B cell (primary cell): ENCODE measurements at regions of chrX and their contacts with region 1.

Region 1: DNA sequence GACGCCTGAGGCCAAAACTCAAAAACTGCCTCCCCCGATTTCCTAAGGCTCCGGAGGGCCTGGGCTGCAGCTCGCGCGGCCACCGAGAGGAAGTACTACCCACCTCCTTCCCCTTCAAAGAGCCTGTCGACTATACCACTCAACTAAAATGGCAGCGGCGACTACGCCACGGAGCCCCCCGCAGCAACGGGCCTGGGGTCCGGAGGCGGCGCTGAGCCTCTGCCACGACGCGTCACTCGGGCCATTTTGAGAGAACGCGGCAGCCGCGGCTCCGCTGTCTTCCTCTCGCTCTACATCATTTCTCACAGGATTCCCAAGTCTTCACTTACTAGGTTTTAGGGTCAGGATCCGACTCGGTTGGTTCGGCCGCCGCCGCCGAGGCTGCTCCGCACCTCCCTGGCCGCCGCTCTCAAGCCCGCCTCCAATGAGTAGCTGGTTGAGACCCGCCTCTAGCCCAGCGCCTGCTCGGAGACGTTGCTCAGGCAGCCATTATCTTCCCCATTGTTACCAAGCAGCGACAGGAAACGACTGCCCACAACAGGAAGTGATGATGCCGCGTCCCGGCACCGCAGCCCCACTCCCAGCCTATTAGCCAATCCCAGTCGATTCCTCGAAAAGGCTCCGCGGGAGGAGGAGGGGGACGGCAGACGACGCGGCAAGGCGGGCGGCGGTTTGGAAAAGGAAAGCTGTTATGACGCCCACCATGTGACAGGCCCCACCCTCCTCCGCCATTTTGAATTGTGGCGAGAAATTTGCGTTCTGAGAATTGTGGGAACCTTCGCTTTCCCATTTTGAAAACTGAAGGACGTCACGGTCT is at the start of gene RLIM:
- DNase-seq: peak; percentile 94
- ATAC-seq: peak; percentile 85
- H3K4me3 ChIP-seq: peak within 1 kb of the TSS; percentile 67 to 94 (median 75)
- H3K4me3 Mint-ChIP-seq: peak within 1 kb of the TSS; percentile 99
- H3K27ac ChIP-seq: peak within 1 kb of the TSS; percentile 98 to 99
- H3K27ac Mint-ChIP-seq: peak within 1 kb of the TSS; percentile 100
- H3K4me1 ChIP-seq: peaks cover 0 to 14% of the 10 kb centered on the region in 2 donors
- H3K4me1 Mint-ChIP-seq: peaks cover 23% of the 10 kb centered on the region
- H3K27me3 ChIP-seq: no peaks in the 10 kb centered on the region
- H3K27me3 Mint-ChIP-seq: no peaks in the 10 kb centered on the region
- CTCF ChIP-seq: no peak
- total RNA-seq, gene RLIM: 40.8 and 43.1 TPM in 2 replicates

Region 2: GRCh38 chrX:74291964-74292807 is 322.1 kb before region 1 on chrX:
- CTCF ChIA-PET with region 1: no interaction called
- POLR2A ChIA-PET with region 1: interaction called, 3 read pairs
- intact Hi-C with region 1: loop called (anchors 2 kb)
- DNase-seq: peak; percentile 92
- ATAC-seq: peak; percentile 88
- H3K4me3 ChIP-seq: peak overlapping the region; percentile 78 to 87 (median 80)
- H3K4me3 Mint-ChIP-seq: peak overlapping the region; percentile 99
- H3K27ac ChIP-seq: peak overlapping the region; percentile 77 to 81
- H3K27ac Mint-ChIP-seq: peak overlapping the region; percentile 98
- H3K4me1 ChIP-seq: peaks cover 3 to 6% of the 10 kb centered on the region in 2 donors
- H3K4me1 Mint-ChIP-seq: peaks cover 18% of the 10 kb centered on the region
- H3K27me3 ChIP-seq: no peaks in the 10 kb centered on the region
- H3K27me3 Mint-ChIP-seq: no peaks in the 10 kb centered on the region
- CTCF ChIP-seq: no peak

Region 3: GRCh38 chrX:74924449-74925225 is 310.3 kb after region 1 on chrX:
- CTCF ChIA-PET with region 1: no interaction called
- POLR2A ChIA-PET with region 1: interaction called, 3 read pairs
- intact Hi-C with region 1: loop called (anchors 10 kb)
- DNase-seq: peak; percentile 53
- ATAC-seq: peak; percentile 52
- H3K4me3 ChIP-seq: peak overlapping the region in 4 of 5 experiments; percentile 24 to 56 (median 43)
- H3K4me3 Mint-ChIP-seq: peak overlapping the region; percentile 95
- H3K27ac ChIP-seq: no peak overlapping the region
- H3K27ac Mint-ChIP-seq: peak overlapping the region; percentile 91
- H3K4me1 ChIP-seq: peaks cover 11% of the 10 kb centered on the region in 2 donors
- H3K4me1 Mint-ChIP-seq: peaks cover 18% of the 10 kb centered on the region
- H3K27me3 ChIP-seq: peaks cover 0 to 4% (median 1%) of the 10 kb centered on the region in 4 experiments
- H3K27me3 Mint-ChIP-seq: peaks cover 7% of the 10 kb centered on the region
- CTCF ChIP-seq: no peak

Region 4: GRCh38 chrX:75273483-75273882 is 659.2 kb after region 1 on chrX:
- CTCF ChIA-PET with region 1: no interaction called
- POLR2A ChIA-PET with region 1: no interaction called
- intact Hi-C with region 1: loop called (anchors 1 kb)
- DNase-seq: no peak
- ATAC-seq: peak; percentile 7
- H3K4me3 ChIP-seq: peak overlapping the region in 4 of 5 experiments; percentile 68 to 96 (median 90)
- H3K4me3 Mint-ChIP-seq: peak overlapping the region; percentile 93
- H3K27ac ChIP-seq: peak overlapping the region; percentile 89 to 90
- H3K27ac Mint-ChIP-seq: peak overlapping the region; percentile 94
- H3K4me1 ChIP-seq: peaks cover 14 to 15% of the 10 kb centered on the region in 2 donors
- H3K4me1 Mint-ChIP-seq: peaks cover 46% of the 10 kb centered on the region
- H3K27me3 ChIP-seq: no peaks in the 10 kb centered on the region
- H3K27me3 Mint-ChIP-seq: no peaks in the 10 kb centered on the region
- CTCF ChIP-seq: no peak

Region 5: DNA sequence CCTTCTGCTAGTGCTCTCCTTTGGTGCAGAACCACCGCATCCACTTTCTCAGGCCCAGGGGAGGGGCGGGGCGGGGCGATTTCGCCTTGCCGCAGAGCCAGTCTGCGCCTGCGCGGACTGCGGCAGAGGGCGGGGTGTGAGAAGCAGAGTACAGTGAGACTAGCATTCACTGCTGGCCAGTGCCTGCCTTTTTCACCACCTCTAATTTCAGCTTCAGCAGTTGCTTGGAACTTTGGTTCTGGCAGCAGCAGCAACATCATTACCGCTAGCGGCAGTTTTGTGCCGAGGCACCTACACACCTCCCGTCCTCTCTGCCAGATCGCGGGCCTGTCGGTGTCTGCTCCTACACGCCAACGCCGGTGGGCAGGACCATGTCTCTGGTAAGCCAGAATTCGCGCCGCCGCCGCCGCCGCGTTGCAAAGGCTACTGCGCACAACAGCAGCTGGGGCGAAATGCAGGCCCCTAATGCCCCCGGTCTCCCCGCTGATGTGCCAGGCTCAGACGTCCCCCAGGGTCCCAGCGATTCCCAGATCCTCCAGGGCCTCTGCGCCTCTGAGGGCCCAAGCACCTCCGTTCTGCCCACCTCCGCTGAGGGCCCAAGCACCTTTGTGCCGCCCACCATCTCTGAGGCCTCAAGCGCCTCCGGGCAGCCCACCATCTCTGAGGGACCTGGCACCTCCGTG is 1813.4 kb after region 1 on chrX and contains the start of gene MAGEE1:
- CTCF ChIA-PET with region 1: no interaction called
- POLR2A ChIA-PET with region 1: no interaction called
- intact Hi-C with region 1: loop called (anchors 5 kb)
- DNase-seq: peak; percentile 90
- ATAC-seq: peak; percentile 89
- H3K4me3 ChIP-seq: peak within 1 kb of the TSS; percentile 1 to 74 (median 73)
- H3K4me3 Mint-ChIP-seq: peak within 1 kb of the TSS; percentile 92
- H3K27ac ChIP-seq: peak within 1 kb of the TSS; percentile 49 to 60
- H3K27ac Mint-ChIP-seq: peak within 1 kb of the TSS; percentile 90
- H3K4me1 ChIP-seq: peaks cover 6 to 17% of the 10 kb centered on the region in 2 donors
- H3K4me1 Mint-ChIP-seq: peaks cover 20% of the 10 kb centered on the region
- H3K27me3 ChIP-seq: no peaks in the 10 kb centered on the region
- H3K27me3 Mint-ChIP-seq: peaks cover 2% of the 10 kb centered on the region
- CTCF ChIP-seq: no peak
- total RNA-seq, gene MAGEE1: 6.7 and 7.0 TPM in 2 replicates